ENCODE measurements at regions of chr2 and their contacts with region 1.

Region 1: GRCh38 chr2:136135921-136136906 is 18.3 kb upstream of the CXCR4 start:
- DNase-seq: peak; percentile 75
- H3K4me3 Mint-ChIP-seq: peak overlapping the region; percentile 11
- H3K27ac Mint-ChIP-seq: peak overlapping the region; percentile 70
- H3K4me1 Mint-ChIP-seq: peaks cover 89% of the 10 kb centered on the region
- H3K27me3 Mint-ChIP-seq: peaks cover 14% of the 10 kb centered on the region

Region 2: DNA sequence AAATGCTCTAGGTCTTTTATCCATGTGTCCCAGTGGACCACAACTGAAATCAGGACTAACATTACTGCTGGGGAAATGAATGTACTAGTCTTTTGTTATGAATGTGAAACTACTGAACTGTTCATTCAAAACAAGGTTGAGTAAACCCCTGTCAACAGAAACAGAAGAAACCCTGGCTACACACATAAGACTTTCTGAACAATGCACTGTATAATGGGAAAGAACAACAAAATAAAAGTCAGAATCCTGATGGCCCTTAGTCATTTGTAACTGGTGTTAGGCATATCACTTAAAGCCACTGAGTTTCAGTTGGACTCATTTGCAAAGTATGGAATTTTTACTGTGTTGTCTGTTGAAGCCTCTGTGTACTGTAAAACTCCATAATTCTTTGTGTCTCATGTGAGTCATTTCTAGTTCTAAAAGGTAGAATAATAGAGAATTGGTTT is 471.6 kb before region 1 on chr2:
- CTCF ChIA-PET with region 1: no interaction called
- POLR2A ChIA-PET with region 1: no interaction called
- intact Hi-C with region 1: loop called (anchors 5 kb)
- DNase-seq: no peak
- H3K4me3 Mint-ChIP-seq: no peak overlapping the region
- H3K27ac Mint-ChIP-seq: peak overlapping the region; percentile 14
- H3K4me1 Mint-ChIP-seq: peaks cover 20% of the 10 kb centered on the region
- H3K27me3 Mint-ChIP-seq: no peaks in the 10 kb centered on the region

Region 3: DNA sequence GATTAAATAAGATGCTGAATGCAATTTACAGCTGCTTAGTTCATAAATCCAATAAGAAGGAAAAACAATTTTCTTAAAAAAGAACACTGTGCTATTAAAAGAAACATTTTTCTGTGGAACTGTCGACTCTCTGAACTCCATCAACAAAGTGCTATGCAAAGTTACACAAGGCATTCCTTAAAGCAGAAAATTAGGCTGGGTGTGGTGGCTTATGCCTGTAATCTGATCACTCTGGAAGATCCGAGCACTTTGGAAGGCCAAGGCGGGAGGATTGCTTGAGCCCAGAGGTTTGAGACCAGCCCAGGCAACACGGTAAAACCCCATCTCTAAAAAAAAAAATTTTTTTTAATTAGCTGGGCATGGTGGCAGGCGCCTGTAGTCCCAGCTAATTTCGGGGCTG is 273.0 kb before region 1 on chr2:
- CTCF ChIA-PET with region 1: no interaction called
- POLR2A ChIA-PET with region 1: no interaction called
- intact Hi-C with region 1: no loop called
- DNase-seq: no peak
- H3K4me3 Mint-ChIP-seq: no peak overlapping the region
- H3K27ac Mint-ChIP-seq: no peak overlapping the region
- H3K4me1 Mint-ChIP-seq: peaks cover 20% of the 10 kb centered on the region
- H3K27me3 Mint-ChIP-seq: no peaks in the 10 kb centered on the region

Region 4: DNA sequence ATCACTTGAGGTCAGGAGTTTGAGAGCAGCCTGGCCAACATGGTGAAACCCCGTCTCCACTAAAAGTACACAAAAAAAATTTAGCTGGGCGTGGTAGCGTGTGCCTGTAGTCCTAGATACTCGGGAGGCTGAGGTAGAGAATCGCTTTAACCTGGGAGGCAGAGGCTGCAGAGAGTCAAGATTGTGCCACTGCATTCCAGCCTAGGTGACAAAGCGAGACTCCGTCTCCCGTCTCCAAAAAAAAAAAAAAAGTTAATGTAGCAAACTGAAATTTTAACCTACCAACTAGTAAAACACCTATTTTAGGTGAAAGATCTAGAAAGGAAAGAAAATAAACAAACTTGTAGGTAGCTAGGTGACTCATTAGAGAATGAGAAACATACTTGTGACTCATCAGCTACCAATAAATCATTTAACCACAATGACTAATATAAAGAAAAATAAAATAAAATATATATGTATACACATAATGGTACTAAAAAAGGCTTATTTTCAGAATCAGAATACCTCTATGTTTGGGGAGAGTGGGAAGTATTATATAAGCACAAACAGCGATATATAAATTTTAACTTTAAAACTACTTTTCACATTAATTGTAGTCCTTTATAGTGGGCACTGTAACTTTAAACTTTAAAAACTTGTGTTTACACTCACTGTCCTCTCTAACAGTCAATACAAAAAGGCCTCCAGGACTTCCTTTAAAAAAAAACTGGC is 187.4 kb before region 1 on chr2:
- CTCF ChIA-PET with region 1: no interaction called
- POLR2A ChIA-PET with region 1: no interaction called
- intact Hi-C with region 1: loop called (anchors 1 kb)
- DNase-seq: peak; percentile 55
- H3K4me3 Mint-ChIP-seq: peak overlapping the region; percentile 53
- H3K27ac Mint-ChIP-seq: peak overlapping the region; percentile 87
- H3K4me1 Mint-ChIP-seq: peaks cover 64% of the 10 kb centered on the region
- H3K27me3 Mint-ChIP-seq: no peaks in the 10 kb centered on the region

Region 5: DNA sequence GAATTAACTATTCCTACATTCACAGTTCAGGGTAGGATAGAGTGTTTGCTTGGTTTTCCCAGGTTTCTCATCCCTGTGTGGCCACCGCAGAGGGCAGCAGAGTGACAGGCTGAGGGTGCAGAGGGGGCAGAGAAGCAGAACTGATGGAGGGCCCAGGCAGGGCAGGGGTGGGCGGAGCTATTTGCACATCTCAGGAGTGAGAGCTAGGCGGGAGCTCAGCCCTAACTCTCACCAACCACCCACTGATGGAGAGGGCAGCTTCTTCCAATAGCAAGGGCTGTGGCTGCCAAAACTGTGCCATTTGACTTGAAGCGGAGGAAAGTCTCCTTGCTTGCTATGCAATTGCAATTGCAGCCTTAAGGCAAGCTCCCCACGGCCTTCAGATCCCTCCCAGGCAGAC is 138.8 kb before region 1 on chr2:
- CTCF ChIA-PET with region 1: no interaction called
- POLR2A ChIA-PET with region 1: no interaction called
- intact Hi-C with region 1: no loop called
- DNase-seq: no peak
- H3K4me3 Mint-ChIP-seq: no peak overlapping the region
- H3K27ac Mint-ChIP-seq: no peak overlapping the region
- H3K4me1 Mint-ChIP-seq: peaks cover 11% of the 10 kb centered on the region
- H3K27me3 Mint-ChIP-seq: no peaks in the 10 kb centered on the region

Region 6: DNA sequence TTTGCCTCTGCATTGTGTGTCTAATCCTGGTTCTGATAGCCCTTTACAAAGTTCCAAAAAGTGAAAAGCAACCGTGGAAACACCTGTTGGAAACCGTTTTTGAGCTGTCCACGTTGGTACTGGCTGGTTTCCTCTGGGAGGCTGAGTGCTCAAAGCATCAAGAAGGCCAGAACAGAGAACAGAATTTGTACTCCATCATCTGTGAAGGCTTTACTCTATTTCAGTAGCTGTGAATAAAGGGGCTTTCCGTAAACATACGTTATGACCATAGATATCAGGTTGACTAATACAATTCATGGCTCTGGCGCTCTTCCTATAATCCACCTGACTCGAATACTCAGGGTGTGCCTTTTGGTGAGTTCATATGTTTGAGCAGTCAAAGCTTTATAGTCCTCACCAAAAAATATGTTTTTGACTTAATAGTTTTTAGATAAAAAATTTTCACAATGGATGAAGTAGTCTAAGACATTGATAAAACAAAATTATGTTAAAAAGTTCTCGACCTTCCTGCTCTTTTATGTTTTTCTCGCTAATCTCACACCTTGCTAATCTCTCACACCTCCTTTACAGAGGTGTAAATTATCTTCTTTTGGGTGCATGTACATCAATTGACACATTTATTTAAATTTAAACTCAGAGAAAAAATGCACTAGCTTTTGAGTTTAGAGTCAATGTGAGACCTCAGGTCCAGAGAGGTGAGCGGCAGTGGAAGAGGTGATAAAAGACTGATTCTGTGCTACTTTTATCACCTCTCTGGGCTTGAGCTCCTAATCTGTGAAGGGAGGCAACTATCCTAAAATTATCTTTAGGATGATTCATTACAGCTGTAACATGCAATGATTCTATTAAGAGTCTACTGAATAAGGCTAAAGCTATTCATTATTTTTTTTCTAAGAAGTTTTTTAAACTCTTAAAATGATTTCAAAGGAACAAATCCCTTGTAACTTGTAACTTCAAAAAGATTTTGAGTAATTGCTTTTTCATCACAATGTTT is 83.5 kb before region 1 on chr2:
- CTCF ChIA-PET with region 1: interaction called, 5 read pairs
- POLR2A ChIA-PET with region 1: interaction called, 13 read pairs
- intact Hi-C with region 1: loop called (anchors 1 kb)
- DNase-seq: peak; percentile 35
- H3K4me3 Mint-ChIP-seq: peak overlapping the region; percentile 57
- H3K27ac Mint-ChIP-seq: peak overlapping the region; percentile 99
- H3K4me1 Mint-ChIP-seq: peaks cover 86% of the 10 kb centered on the region
- H3K27me3 Mint-ChIP-seq: no peaks in the 10 kb centered on the region

Region 7: GRCh38 chr2:136171221-136171620 is 35.0 kb after region 1 on chr2:
- CTCF ChIA-PET with region 1: no interaction called
- POLR2A ChIA-PET with region 1: no interaction called
- intact Hi-C with region 1: no loop called
- DNase-seq: no peak
- H3K4me3 Mint-ChIP-seq: no peak overlapping the region
- H3K27ac Mint-ChIP-seq: no peak overlapping the region
- H3K4me1 Mint-ChIP-seq: peaks cover 7% of the 10 kb centered on the region
- H3K27me3 Mint-ChIP-seq: no peaks in the 10 kb centered on the region

Region 8: GRCh38 chr2:136207030-136207623 is 70.9 kb after region 1 on chr2:
- CTCF ChIA-PET with region 1: interaction called, 5 read pairs
- POLR2A ChIA-PET with region 1: interaction called, 12 read pairs
- intact Hi-C with region 1: loop called (anchors 1 kb)
- DNase-seq: peak; percentile 65
- H3K4me3 Mint-ChIP-seq: peak overlapping the region; percentile 3
- H3K27ac Mint-ChIP-seq: peak overlapping the region; percentile 96
- H3K4me1 Mint-ChIP-seq: peaks cover 46% of the 10 kb centered on the region
- H3K27me3 Mint-ChIP-seq: no peaks in the 10 kb centered on the region

Region 9: GRCh38 chr2:136327162-136327852 is 191.1 kb after region 1 on chr2:
- CTCF ChIA-PET with region 1: no interaction called
- POLR2A ChIA-PET with region 1: interaction called, 12 read pairs
- intact Hi-C with region 1: loop called (anchors 1 kb)
- DNase-seq: peak; percentile 93
- H3K4me3 Mint-ChIP-seq: peak overlapping the region; percentile 60
- H3K27ac Mint-ChIP-seq: peak overlapping the region; percentile 90
- H3K4me1 Mint-ChIP-seq: peaks cover 73% of the 10 kb centered on the region
- H3K27me3 Mint-ChIP-seq: no peaks in the 10 kb centered on the region

Measured in activated CD4-positive, alpha-beta memory T cell treated with anti-CD3 and anti-CD28 coated beads for 36 hours (primary cell).